Natural killer cell (primary cell): ENCODE measurements at regions of chr14 and their contacts with region 1.

Region 1: GRCh38 chr14:75249251-75249957 is 29.2 kb upstream of the FOS start:
- DNase-seq: peak; percentile 76 to 95
- ATAC-seq: peak; percentile 68 to 84 (median 80)
- H3K4me3 ChIP-seq: no peak overlapping the region
- H3K4me3 Mint-ChIP-seq: peak overlapping the region; percentile 84
- H3K27ac ChIP-seq: peak overlapping the region; percentile 88
- H3K27ac Mint-ChIP-seq: peak overlapping the region; percentile 90 to 93
- H3K4me1 ChIP-seq: peaks cover 61% of the 10 kb centered on the region
- H3K4me1 Mint-ChIP-seq: peaks cover 58% of the 10 kb centered on the region in 2 donors
- H3K27me3 ChIP-seq: no peaks in the 10 kb centered on the region
- H3K27me3 Mint-ChIP-seq: no peaks in the 10 kb centered on the region
- CTCF ChIP-seq: no peak

Region 2: DNA sequence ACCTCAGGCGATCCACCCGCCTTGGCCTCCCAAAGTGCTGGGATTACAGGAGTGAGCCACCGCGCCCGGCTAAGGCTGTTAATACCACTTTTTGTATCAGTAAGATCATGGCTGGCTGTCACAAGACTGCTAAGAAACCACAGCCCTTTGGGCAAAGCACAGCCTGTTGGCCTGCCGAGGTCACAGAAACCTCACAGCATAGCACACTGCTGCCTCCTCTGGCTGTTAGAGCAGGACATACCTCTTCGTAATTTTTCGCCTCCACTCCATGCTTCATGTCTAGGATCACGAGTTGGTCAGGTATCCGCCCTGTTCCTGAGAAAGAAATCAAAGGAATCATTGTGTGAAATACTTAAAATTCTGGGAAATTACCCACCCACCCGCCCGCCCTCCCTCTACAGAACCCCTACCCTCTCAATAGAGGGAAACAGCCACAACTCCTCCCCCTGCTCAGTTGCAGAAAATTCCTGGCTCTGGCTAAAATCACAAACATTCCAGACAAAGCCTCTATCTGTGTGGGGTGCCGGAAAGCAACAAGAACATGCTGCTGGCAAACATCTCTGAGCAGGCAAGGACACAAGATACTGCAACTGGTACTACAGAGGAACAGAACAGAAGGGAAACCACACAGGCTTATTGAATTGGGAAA is 101.9 kb before region 1 on chr14:
- intact Hi-C with region 1: loop called (anchors 5 kb)
- DNase-seq: peak; percentile 50 to 61
- ATAC-seq: peak; percentile 96 to 100 (median 99)
- H3K4me3 ChIP-seq: no peak overlapping the region
- H3K4me3 Mint-ChIP-seq: peak overlapping the region; percentile 70
- H3K27ac ChIP-seq: peak overlapping the region; percentile 54
- H3K27ac Mint-ChIP-seq: peak overlapping the region; percentile 87 to 90
- H3K4me1 ChIP-seq: peaks cover 25% of the 10 kb centered on the region
- H3K4me1 Mint-ChIP-seq: peaks cover 52 to 53% of the 10 kb centered on the region in 2 donors
- H3K27me3 ChIP-seq: no peaks in the 10 kb centered on the region
- H3K27me3 Mint-ChIP-seq: no peaks in the 10 kb centered on the region
- CTCF ChIP-seq: peak; percentile 50

Region 3: DNA sequence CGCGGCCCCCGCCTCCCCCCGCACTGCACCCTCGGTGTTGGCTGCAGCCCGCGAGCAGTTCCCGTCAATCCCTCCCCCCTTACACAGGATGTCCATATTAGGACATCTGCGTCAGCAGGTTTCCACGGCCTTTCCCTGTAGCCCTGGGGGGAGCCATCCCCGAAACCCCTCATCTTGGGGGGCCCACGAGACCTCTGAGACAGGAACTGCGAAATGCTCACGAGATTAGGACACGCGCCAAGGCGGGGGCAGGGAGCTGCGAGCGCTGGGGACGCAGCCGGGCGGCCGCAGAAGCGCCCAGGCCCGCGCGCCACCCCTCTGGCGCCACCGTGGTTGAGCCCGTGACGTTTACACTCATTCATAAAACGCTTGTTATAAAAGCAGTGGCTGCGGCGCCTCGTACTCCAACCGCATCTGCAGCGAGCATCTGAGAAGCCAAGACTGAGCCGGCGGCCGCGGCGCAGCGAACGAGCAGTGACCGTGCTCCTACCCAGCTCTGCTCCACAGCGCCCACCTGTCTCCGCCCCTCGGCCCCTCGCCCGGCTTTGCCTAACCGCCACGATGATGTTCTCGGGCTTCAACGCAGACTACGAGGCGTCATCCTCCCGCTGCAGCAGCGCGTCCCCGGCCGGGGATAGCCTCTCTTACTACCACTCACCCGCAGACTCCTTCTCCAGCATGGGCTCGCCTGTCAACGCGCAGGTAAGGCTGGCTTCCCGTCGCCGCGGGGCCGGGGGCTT is 29.2 kb after region 1 on chr14 and contains the start of gene FOS:
- intact Hi-C with region 1: loop called (anchors 1 kb)
- DNase-seq: peak; percentile 94 to 97
- ATAC-seq: peak; percentile 62 to 84 (median 71)
- H3K4me3 ChIP-seq: peak within 1 kb of the TSS; percentile 97
- H3K4me3 Mint-ChIP-seq: peak within 1 kb of the TSS; percentile 93
- H3K27ac ChIP-seq: peak within 1 kb of the TSS; percentile 84
- H3K27ac Mint-ChIP-seq: peak within 1 kb of the TSS; percentile 93 to 95
- H3K4me1 ChIP-seq: peaks cover 65% of the 10 kb centered on the region
- H3K4me1 Mint-ChIP-seq: peaks cover 63 to 79% of the 10 kb centered on the region in 2 donors
- H3K27me3 ChIP-seq: peaks cover 21% of the 10 kb centered on the region
- H3K27me3 Mint-ChIP-seq: peaks cover 20 to 26% of the 10 kb centered on the region in 2 donors
- CTCF ChIP-seq: no peak
- total RNA-seq, gene FOS: 2,527 to 3,257 (median 3,104) TPM

Region 4: DNA sequence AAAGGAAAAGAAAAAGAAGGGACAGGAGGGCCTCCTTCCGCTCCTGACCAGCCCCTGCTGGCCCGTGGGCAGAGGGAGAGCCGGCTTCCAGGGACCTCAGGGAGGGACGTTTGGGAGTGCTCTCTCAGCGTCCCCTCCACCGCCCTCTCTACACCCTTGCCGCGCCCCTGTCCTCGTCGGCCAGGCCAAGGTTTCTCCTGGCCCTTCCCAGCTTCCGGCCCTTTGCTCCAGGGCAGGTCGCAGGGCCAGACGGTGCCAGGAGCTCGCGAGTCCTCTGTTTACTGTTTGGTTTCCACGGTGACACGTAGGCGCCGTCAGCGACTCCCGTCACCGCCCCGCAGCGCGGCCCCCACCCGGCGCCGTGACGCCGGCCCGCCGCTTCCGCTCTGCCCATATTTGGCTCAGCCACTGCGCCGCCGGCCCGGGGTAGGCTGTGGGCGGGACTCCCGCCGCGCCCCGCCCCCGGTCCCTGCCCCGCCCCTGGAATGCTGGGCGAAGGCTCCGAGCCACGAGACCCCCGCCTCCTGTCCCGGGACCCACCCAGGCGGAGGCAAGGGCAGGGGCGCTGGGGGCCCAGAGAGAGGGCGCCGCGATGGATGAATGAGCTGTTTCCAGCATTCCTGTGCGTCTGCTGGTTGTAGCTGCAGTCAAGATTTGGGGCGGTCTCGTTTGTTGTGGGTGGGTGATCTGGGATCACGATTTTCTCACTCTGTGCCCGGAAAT is 44.7 kb after region 1 on chr14:
- intact Hi-C with region 1: loop called (anchors 1 kb)
- DNase-seq: peak; percentile 95 to 99
- ATAC-seq: peak; percentile 79 to 95 (median 86)
- H3K4me3 ChIP-seq: peak overlapping the region; percentile 66
- H3K4me3 Mint-ChIP-seq: peak overlapping the region; percentile 98
- H3K27ac ChIP-seq: peak overlapping the region; percentile 94
- H3K27ac Mint-ChIP-seq: peak overlapping the region; percentile 89 to 96
- H3K4me1 ChIP-seq: peaks cover 33% of the 10 kb centered on the region
- H3K4me1 Mint-ChIP-seq: peaks cover 11 to 19% of the 10 kb centered on the region in 2 donors
- H3K27me3 ChIP-seq: no peaks in the 10 kb centered on the region
- H3K27me3 Mint-ChIP-seq: peaks cover 8 to 9% of the 10 kb centered on the region in 2 donors
- CTCF ChIP-seq: no peak

Region 5: DNA sequence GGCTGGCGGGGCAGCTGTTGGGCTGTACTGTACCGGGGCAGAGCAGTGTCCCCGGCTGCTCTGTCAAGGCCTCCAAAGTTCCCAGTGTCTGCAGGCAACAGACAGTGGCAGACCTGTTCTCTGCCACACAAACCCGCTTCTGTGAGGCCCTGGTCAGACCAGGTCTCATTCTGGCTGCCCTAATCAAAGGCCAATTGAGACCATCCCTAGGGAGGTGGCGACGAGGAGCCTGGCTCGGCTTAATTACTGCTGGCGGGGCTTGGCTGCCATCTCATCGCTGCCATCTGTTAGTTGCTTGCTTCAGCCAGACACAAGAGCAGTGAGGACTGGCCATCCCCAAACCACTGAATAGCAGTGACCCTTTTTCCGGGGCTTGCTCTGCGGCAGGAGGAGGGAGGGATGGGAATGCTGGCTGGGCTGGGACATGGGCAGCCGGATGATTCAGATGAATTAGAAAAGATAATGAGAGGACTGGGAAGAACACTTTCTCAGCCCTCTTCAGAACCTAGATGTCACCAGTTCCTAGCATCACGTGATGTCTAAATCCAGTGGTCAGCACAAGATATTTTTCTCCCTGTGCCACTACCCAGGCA is 386.8 kb after region 1 on chr14:
- intact Hi-C with region 1: no loop called
- DNase-seq: no peak
- ATAC-seq: no peak
- H3K4me3 ChIP-seq: no peak overlapping the region
- H3K4me3 Mint-ChIP-seq: no peak overlapping the region
- H3K27ac ChIP-seq: no peak overlapping the region
- H3K27ac Mint-ChIP-seq: no peak overlapping the region
- H3K4me1 ChIP-seq: no peaks in the 10 kb centered on the region
- H3K4me1 Mint-ChIP-seq: no peaks in the 10 kb centered on the region
- H3K27me3 ChIP-seq: no peaks in the 10 kb centered on the region
- H3K27me3 Mint-ChIP-seq: no peaks in the 10 kb centered on the region
- CTCF ChIP-seq: no peak